BJ (cell line): ENCODE measurements at regions of chr17 and their contacts with region 1.

Region 1: GRCh38 chr17:45385331-45385997 is 47.2 kb downstream of the ARHGAP27 start:
- DNase-seq: no peak
- H3K4me3 ChIP-seq: no peak overlapping the region
- H3K27me3 ChIP-seq: no peaks in the 10 kb centered on the region; the same call in 1 of the 2 replicates
- CTCF ChIP-seq: peak; percentile 100

Region 2: GRCh38 chr17:45228763-45229539 is 156.5 kb before region 1 on chr17:
- CTCF ChIA-PET with region 1: interaction called, 25 read pairs
- POLR2A ChIA-PET with region 1: no interaction called
- DNase-seq: no peak
- H3K4me3 ChIP-seq: no peak overlapping the region
- H3K27me3 ChIP-seq: no peaks in the 10 kb centered on the region
- CTCF ChIP-seq: no peak

Region 3: DNA sequence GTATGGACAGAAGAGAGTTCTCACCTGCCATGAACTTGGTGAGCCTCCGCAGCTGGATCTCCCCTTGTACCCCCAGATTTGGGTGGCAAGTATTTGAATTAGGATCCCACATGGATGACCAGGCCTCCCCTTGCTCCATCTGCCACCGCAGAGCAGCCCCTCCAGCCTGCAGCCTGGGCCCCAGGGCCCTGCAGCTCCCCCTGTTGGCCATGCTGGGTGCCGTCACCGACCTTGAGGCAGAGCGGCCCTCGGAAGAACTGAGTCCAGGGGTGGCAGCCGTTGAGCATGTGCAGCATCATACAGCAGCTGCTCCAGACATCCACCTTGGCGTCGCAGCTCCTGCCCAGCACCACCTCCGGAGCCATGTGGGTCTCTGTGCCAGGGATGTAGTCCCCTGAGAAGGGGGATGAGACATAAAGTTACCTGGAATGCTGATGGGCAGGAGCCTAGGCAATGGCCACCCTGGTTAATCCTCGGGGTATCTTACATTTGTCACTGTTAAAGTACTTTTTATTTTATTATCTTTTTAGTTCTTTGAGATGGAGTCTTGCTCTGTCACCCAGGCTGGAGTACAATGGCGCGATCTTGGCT is 114.5 kb before region 1 on chr17:
- CTCF ChIA-PET with region 1: interaction called, 83 read pairs
- POLR2A ChIA-PET with region 1: no interaction called
- DNase-seq: no peak
- H3K4me3 ChIP-seq: no peak overlapping the region
- H3K27me3 ChIP-seq: no peaks in the 10 kb centered on the region
- CTCF ChIP-seq: peak; percentile 65

Region 4: DNA sequence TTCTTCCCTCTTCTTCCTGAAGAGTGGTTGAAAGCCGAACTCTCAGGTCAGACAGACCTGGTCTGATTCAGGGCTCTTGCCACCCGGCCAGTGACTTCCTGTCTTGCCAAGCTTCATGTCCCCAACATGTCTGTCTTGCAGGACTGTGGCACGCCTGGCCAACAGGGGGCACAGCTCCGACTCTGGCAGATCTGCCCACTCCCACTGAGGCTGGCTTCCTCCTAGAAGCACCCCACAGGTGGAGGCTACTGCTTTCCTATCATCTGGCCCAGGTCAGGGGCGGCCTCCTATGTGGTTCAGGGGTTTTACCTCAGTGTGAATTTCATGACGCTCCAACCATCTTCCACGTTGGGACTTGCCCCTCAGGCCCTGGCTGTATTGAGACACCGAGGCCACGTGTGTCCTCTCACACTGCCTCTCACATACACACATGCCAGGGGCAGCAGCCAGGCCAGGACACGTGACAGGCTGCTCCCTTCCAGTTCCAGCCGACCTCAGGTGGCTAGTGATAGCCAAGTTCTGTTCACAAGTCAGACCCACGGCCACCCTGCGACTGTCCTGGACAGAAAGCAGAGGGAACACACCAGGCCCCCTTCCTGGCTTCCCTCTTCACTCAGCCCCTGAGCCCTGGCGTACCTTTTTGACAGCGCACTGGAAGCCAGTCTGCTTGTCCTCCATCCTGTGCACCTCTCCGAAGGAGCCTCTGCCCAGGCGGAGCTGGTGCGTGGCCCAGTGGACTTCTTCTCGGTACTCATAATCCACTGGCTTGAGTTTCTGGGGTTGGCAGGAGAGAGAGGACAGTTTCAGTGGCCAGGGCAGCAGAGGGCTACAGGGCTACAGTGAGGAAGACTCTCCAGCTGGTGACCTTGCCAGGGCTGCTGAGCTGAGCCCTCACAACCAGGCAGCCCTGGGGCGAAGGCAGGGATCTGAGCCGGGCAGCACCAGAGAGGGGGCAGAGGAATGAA is 101.0 kb before region 1 on chr17:
- CTCF ChIA-PET with region 1: interaction called, 12 read pairs
- POLR2A ChIA-PET with region 1: no interaction called
- DNase-seq: no peak
- H3K4me3 ChIP-seq: no peak overlapping the region
- H3K27me3 ChIP-seq: no peaks in the 10 kb centered on the region
- CTCF ChIP-seq: peak; percentile 23; the same call in 1 of the 2 replicates

Region 5: DNA sequence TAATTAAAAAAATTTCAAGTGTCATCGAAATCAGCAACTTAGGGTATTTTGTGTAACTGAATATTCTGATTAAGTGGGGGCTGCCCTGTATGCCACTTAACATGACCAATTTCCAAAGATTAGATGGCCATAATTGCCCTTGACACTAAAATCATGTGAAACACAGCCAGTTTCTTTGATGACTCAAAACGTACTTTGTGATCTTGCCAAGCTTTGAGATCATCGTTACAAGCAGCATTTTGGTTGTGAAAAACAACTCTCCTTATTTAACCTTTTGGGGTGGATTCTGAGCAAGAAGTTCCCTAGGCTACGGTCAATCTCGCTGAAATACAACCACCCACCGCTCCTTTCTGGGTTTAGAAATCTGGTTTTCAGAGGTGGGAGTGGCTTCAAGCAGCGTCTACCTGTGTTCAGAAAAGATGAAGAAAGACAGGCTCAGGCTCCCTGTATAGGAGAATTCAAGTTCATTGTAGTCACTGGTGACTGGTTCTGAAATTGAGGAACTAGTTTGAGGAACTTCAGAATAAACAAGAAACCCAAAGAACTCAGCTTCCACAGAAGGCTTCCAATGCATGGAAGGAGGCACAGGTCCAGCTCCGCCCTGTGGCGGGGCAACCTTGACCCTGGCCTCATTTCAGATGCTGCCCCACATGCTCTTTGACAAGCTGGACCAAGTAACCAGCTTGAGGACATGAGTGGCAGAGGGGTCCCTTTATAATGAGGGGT is 78.0 kb before region 1 on chr17:
- CTCF ChIA-PET with region 1: interaction called, 10 read pairs
- POLR2A ChIA-PET with region 1: no interaction called
- DNase-seq: peak; percentile 77
- H3K4me3 ChIP-seq: no peak overlapping the region
- H3K27me3 ChIP-seq: no peaks in the 10 kb centered on the region
- CTCF ChIP-seq: no peak

Region 6: GRCh38 chr17:45353043-45353442 is 32.4 kb before region 1 on chr17:
- CTCF ChIA-PET with region 1: no interaction called
- POLR2A ChIA-PET with region 1: no interaction called
- DNase-seq: no peak
- H3K4me3 ChIP-seq: no peak overlapping the region
- H3K27me3 ChIP-seq: no peaks in the 10 kb centered on the region
- CTCF ChIP-seq: no peak

Region 7: GRCh38 chr17:45371414-45372327 is 13.8 kb before region 1 on chr17:
- CTCF ChIA-PET with region 1: interaction called, 31 read pairs
- POLR2A ChIA-PET with region 1: no interaction called
- DNase-seq: peak; percentile 91
- H3K4me3 ChIP-seq: no peak overlapping the region
- H3K27me3 ChIP-seq: no peaks in the 10 kb centered on the region
- CTCF ChIP-seq: peak; percentile 33; the same call in 1 of the 2 replicates

Region 8: DNA sequence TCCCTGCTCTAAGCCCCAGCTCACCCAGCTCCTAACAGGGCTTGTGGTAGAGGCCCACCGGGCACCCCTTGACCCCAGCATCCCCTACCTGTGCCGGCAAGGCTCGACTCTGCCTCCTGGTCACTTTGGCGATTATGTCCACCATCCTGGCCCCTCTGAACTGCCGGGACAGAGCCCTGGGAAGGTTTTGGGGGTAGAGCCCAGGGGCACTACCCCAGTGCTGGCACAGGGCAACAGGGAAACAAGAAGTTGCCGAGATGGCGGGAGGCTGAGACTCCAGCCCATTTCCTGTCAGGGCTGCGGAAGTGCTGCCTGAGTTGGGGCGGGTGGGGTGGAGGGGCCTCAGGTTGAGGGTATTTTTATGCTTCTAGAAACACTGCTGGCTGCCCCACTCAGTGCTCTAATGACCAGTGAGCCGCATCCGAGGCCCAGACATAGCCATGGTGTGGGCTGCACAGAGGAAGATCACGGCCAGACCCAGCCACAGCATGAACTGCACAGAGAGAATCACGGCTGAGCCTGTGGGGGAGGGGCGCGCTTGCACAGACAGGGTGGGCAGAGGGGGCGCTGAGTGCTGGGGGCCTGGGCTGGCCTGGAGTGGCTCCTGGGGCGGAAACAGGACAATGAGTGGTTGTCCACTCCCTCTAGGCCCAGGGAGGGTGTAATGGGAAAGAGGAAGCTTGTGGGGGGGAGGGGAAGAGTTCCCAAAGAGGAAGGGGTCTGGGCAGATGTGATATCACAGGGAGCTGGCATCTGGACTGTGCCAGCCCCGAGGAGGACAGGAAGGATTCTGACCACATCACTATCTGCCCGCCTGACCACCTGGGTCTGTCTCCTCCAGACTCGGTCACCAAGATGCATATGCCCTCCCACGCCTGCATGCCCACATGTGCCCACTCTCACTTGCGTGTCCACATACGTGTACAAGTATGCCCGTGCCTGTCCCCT is 25.0 kb after region 1 on chr17:
- CTCF ChIA-PET with region 1: no interaction called
- POLR2A ChIA-PET with region 1: no interaction called
- DNase-seq: no peak
- H3K4me3 ChIP-seq: no peak overlapping the region
- H3K27me3 ChIP-seq: no peaks in the 10 kb centered on the region
- CTCF ChIP-seq: no peak